HEK293T (cell line): ENCODE measurements at regions of chr17 and their contacts with region 1.

Region 1: GRCh38 chr17:11997147-11997846 is at the start of gene ZNF18:
- DNase-seq: peak; percentile 97

Region 2: DNA sequence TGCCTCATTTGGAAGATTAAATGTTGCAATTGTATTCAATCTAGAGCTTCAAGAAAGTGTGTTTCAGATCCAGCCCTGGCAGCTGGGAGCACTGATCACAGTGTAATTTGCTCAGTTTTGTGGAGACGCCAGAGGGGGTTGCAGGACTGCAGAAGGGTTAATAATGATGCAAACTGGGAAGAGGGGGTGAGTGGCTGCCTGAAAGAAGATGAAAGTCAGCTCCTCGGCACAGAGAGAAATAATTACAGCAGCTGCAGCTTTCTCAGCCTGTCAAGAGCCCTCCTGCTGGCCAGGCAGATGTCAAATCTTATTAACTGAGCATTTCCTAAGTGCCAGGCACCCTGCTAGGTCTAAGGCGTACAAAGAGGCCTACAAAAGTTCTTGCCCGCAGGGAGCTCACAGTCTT is 97.8 kb before region 1 on chr17:
- CTCF ChIA-PET with region 1: no interaction called
- POLR2A ChIA-PET with region 1: no interaction called
- DNase-seq: no peak

Region 3: DNA sequence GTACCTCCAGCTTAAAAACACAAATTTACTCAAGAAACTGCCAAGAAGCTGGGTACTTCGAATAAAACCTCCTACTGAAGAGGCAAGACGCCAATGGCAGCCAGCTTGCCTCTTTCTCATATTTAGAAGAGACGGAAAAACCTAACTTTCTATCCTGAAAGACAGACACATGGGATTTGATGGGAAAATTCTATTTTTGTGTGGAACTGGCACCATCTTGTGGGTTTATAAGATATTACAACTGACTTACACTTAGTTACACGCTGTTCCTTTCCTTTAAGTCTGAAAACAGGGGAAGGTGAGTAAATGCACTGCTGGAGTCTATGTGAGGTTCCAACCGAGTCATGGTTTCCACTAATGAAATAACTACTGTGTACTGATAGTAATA is 10.4 kb before region 1 on chr17:
- CTCF ChIA-PET with region 1: interaction called, 7 read pairs
- POLR2A ChIA-PET with region 1: interaction called, 10 read pairs
- DNase-seq: peak; percentile 30

Region 4: DNA sequence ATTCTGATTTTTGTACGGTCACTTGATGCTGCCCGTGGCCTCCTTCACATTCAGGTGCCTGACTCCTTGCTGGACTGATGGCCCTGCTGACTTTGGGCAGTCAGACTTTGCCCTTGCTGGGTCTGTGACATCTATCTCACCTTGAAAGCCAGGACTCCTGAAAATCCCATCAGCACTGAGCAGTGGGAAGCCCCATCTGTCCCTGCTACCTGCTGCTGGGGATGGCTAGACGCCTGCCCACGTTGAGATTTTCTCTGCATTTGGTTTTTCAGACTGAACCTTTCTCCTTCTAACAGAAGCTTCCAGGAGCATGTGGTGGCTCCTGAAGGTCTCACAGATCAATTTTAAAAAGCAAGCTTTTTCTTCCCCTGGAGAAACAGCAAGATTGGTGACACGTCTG is 10.2 kb after region 1 on chr17:
- CTCF ChIA-PET with region 1: no interaction called
- POLR2A ChIA-PET with region 1: interaction called, 54 read pairs
- DNase-seq: no peak

Region 5: GRCh38 chr17:12020642-12021622 is 23.6 kb after region 1 on chr17 and contains the start of gene MAP2K4:
- CTCF ChIA-PET with region 1: interaction called, 3 read pairs
- POLR2A ChIA-PET with region 1: interaction called, 88 read pairs
- DNase-seq: peak; percentile 99

Region 6: GRCh38 chr17:12040478-12040877 is 43.2 kb after region 1 on chr17:
- CTCF ChIA-PET with region 1: no interaction called
- POLR2A ChIA-PET with region 1: interaction called, 10 read pairs
- DNase-seq: no peak

Region 7: GRCh38 chr17:12050646-12051225 is 53.4 kb after region 1 on chr17:
- CTCF ChIA-PET with region 1: no interaction called
- POLR2A ChIA-PET with region 1: interaction called, 12 read pairs
- DNase-seq: no peak

Region 8: GRCh38 chr17:12089809-12090384 is 92.6 kb after region 1 on chr17:
- CTCF ChIA-PET with region 1: no interaction called
- POLR2A ChIA-PET with region 1: no interaction called
- DNase-seq: no peak

Region 9: GRCh38 chr17:13017659-13018459 is 1020.6 kb after region 1 on chr17 and contains the start of gene ELAC2:
- CTCF ChIA-PET with region 1: no interaction called
- POLR2A ChIA-PET with region 1: interaction called, 12 read pairs
- DNase-seq: peak; percentile 94